Dendritic cell treated with granulocyte-macrophage colony-stimulating factor and Interleukin-4, amounts not matched to agents 40 ng/mL and 50 ng/mL, for 4 days (primary cell): ENCODE measurements at regions of chr17 and their contacts with region 1.

Region 1: DNA sequence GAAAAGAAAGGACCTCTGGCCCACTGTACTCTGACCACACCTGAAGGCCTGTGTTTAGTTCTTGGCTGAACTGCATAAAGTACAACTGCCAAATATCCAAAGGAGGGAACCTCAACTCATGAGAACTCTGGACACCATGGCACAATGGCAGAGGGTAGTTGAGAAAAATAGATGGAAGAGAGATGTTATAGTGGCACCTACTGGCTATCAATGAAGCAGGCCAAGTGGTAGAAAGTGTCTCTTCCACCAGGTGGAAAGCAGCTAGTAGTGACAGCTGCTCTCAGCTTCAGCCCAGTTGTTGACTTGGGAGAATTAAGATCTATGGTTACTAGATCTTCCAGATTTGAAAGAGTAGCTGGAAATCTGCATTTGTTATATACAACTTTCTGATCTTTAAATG is 3.2 kb downstream of the MED31 start:
- H3K4me3 Mint-ChIP-seq: no peak overlapping the region
- H3K27ac Mint-ChIP-seq: peak overlapping the region; percentile 52
- H3K4me1 Mint-ChIP-seq: peaks cover 51% of the 10 kb centered on the region
- H3K27me3 Mint-ChIP-seq: peaks cover 6% of the 10 kb centered on the region

Region 2: GRCh38 chr17:6402258-6402657 is 245.9 kb before region 1 on chr17:
- intact Hi-C with region 1: no loop called
- H3K4me3 Mint-ChIP-seq: no peak overlapping the region
- H3K27ac Mint-ChIP-seq: no peak overlapping the region
- H3K4me1 Mint-ChIP-seq: no peaks in the 10 kb centered on the region
- H3K27me3 Mint-ChIP-seq: peaks cover 10% of the 10 kb centered on the region

Region 3: GRCh38 chr17:6473128-6473767 is 174.9 kb before region 1 on chr17:
- intact Hi-C with region 1: loop called (anchors 1 kb)
- H3K4me3 Mint-ChIP-seq: no peak overlapping the region
- H3K27ac Mint-ChIP-seq: no peak overlapping the region
- H3K4me1 Mint-ChIP-seq: peaks cover 5% of the 10 kb centered on the region
- H3K27me3 Mint-ChIP-seq: peaks cover 25% of the 10 kb centered on the region